ENCODE measurements at regions of chr2 and their contacts with region 1.

Region 1: DNA sequence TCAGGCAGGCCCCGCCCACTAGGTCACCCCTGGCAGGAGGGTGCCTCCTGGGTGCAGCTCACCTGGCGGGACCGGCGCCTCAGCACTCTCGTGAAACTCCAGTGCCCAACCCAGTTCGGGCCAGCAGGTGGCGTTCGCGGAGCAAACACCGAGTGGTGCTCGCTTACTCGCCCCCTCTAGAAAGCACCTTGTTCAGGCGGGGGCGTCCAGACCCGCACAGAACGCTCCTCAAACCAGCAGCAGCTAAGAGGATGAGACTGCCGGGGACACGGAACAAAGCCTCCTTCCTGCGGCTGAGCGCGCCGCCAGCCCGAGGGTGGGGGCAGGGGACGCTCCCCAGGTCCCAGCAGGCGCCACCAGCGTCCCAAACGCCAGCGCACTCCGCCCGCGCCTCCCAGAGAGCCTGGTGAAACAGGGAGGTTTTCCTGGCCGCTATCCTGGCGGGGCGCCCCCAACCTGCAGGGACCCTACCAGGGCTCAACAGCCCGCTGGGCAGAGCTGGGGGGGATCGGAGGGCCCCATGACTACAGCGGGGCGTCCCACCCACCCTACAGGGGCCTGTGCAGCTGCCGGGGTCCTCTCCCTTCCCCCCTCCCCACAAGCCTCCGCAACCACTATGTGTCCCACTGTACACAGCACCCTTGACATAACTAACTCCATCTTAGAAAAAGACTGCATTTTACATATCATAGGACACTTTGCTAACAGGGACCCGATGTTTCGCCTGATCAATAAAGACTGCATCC is 44.7 kb downstream of the MRPS5 start:
- DNase-seq: peak; percentile 84
- H3K4me3 ChIP-seq: peak overlapping the region; percentile 51 to 76
- H3K27ac ChIP-seq: no peak overlapping the region
- H3K4me1 ChIP-seq: peaks cover 0 to 7% of the 10 kb centered on the region in 2 experiments; a peak in 1 of 4 replicates
- H3K27me3 ChIP-seq: peaks cover 69% of the 10 kb centered on the region
- CTCF ChIP-seq: peak; percentile 81
- EP300 ChIP-seq: no peak
- RAD21 ChIP-seq: peak; percentile 52

Region 2: DNA sequence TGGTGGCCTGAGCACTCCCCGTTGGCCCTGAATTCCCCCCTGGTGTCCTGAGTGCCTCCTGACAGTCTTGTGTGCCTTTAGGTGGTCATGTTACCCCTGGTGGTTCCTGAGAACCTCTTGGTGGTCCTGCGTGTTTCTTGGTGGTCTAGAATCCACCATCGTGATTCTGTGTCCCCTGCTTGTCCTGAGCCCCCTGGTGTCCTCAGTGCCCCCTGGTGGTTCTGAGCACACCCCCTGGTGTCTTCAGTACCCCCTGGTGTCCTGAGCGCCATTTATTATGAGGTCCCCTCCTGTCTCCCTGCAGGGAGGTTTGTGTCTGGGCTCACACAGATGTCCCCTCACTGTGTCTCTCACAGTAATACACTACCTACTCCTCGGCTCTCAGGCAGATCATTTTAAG is 112.8 kb before region 1 on chr2:
- CTCF ChIA-PET with region 1: no interaction called
- POLR2A ChIA-PET with region 1: no interaction called
- DNase-seq: no peak
- H3K4me3 ChIP-seq: no peak overlapping the region
- H3K27ac ChIP-seq: no peak overlapping the region
- H3K4me1 ChIP-seq: no peaks in the 10 kb centered on the region
- H3K27me3 ChIP-seq: peaks cover 14% of the 10 kb centered on the region; the same call in 1 of the 2 replicates
- CTCF ChIP-seq: no peak
- EP300 ChIP-seq: no peak
- RAD21 ChIP-seq: no peak

Region 3: DNA sequence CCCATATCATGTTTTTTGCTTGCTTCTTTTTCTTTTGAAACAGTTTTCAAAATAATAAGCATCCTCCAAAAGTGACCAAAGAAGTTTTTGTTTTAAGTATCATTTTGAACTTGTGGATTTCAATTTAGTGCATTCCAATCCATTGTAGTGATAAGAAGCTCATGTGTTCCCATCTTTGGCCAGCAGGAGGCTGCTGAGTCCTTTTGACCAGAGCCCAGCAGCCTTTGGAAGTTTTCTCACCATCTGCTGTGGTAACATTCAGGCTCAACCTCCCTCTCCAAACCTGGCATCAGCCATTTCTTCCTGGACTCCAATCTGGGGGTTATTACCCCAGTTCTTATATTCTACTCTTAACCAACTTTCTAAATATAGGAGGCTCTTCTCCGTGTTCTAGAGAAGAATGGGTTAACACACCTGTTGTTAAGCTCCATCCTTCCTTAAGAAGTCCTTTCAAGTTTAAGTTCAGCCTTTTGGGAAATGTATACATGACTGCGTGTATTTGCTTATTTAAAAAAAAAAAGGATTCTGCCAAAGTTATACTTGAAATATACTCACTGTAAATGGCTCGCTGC is 90.5 kb before region 1 on chr2:
- CTCF ChIA-PET with region 1: interaction called, 11 read pairs
- POLR2A ChIA-PET with region 1: no interaction called
- DNase-seq: peak; percentile 63
- H3K4me3 ChIP-seq: no peak overlapping the region
- H3K27ac ChIP-seq: no peak overlapping the region
- H3K4me1 ChIP-seq: no peaks in the 10 kb centered on the region
- H3K27me3 ChIP-seq: peaks cover 53% of the 10 kb centered on the region
- CTCF ChIP-seq: peak; percentile 77
- EP300 ChIP-seq: no peak
- RAD21 ChIP-seq: peak; percentile 53

Region 4: DNA sequence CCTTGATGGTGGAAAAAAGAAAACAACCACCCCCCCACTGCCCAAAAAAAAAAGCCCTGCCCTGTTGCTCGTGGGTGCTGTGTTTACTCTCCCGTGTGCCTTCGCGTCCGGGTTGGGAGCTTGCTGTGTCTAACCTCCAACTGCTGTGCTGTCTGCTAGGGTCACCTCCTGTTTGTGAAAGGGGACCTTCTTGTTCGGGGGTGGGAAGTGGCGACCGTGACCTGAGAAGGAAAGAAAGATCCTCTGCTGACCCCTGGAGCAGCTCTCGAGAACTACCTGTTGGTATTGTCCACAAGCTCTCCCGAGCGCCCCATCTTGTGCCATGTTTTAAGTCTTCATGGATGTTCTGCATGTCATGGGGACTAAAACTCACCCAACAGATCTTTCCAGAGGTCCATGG is 23.4 kb before region 1 on chr2:
- CTCF ChIA-PET with region 1: interaction called, 15 read pairs
- POLR2A ChIA-PET with region 1: no interaction called
- DNase-seq: no peak
- H3K4me3 ChIP-seq: no peak overlapping the region
- H3K27ac ChIP-seq: no peak overlapping the region
- H3K4me1 ChIP-seq: no peaks in the 10 kb centered on the region
- H3K27me3 ChIP-seq: peaks cover 50% of the 10 kb centered on the region
- CTCF ChIP-seq: no peak
- EP300 ChIP-seq: no peak
- RAD21 ChIP-seq: no peak

Region 5: DNA sequence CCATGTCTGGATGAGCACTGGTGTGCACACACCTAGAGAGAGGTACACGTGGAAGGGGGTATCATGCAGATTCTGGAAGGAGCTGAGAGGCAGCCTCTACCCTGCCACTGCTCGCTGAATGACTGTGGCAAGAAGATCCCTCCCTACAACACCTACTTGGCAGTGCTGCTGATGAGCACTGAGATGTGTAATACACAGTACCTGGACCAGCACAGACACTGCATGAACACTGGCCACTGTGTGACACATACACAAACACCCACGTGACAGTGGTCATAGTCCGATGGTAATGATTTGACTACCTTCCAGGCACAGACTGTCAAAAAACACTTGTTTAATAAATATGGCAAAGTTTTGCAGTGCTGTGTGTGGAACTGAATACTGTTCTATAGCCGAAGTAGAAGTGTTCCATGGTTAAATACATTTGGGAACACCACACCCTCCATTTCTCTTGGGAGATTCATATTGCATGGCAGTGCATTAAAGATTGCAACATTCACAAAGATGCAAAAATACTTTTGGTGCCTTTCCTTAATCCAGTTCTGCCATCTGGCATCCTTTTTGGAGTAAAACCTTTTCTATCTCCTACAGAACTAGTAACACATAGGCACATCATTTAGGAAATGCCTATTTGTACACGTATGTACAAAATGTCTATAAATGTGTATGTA is 15.1 kb after region 1 on chr2:
- CTCF ChIA-PET with region 1: interaction called, 20 read pairs
- POLR2A ChIA-PET with region 1: no interaction called
- DNase-seq: no peak
- H3K4me3 ChIP-seq: no peak overlapping the region
- H3K27ac ChIP-seq: no peak overlapping the region
- H3K4me1 ChIP-seq: no peaks in the 10 kb centered on the region
- H3K27me3 ChIP-seq: no peaks in the 10 kb centered on the region
- CTCF ChIP-seq: no peak
- EP300 ChIP-seq: no peak
- RAD21 ChIP-seq: no peak

Region 6: DNA sequence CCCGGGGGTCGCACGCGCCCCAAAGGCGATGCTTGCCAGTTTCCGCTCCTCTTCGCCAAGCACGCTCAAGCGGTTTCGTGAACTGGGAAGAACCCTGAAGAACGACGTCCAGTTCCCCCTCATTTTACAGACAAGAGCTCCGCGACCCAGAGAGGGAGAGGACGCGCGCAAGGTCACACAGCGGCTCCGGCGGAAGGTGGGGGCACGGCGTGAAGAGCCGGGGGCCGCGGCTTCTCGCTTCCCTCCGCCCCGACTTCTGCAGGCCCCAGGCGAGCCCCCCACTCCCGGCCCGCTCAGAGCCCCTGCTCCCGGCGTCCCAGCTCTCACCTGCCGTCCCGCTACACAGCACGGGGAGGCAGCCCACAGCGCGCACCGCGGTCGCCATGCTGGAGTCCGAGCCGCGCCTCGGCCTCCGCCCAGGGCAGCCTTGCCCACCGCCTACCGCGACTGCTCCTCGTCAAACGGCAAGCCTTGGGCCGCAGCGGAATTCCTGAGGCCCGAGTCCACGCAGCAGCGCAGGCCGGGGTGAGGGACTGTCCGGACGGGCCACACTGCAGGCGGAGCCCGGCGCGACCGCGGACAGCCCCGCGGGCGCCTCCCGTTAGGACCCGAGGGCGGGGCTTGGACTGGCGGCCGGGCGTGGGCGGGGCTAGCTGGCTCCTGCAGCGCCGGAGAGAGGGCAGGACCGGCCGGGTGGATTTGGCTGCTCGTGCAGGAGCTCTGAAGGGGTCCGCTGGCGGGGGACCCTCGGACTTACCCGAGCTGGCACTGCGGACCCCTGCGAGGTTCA is 44.6 kb after region 1 on chr2 and contains the start of gene MRPS5:
- CTCF ChIA-PET with region 1: interaction called, 65 read pairs
- POLR2A ChIA-PET with region 1: no interaction called
- DNase-seq: peak; percentile 96
- H3K4me3 ChIP-seq: peak within 1 kb of the TSS; percentile 77 to 96
- H3K27ac ChIP-seq: peak within 1 kb of the TSS; percentile 77 to 94
- H3K4me1 ChIP-seq: peaks cover 0 to 3% of the 10 kb centered on the region in 2 experiments; a peak in 1 of 4 replicates
- H3K27me3 ChIP-seq: no peaks in the 10 kb centered on the region
- CTCF ChIP-seq: peak; percentile 21; the same call in 1 of the 2 replicates
- EP300 ChIP-seq: 0 out of 4 replicates have a peak, but pooled peaks of 1 of the 2 experiments have one; percentile 26
- RAD21 ChIP-seq: no peak
- polyA plus RNA-seq, gene MRPS5: 32.8 and 40.4 TPM in 2 replicates

Region 7: DNA sequence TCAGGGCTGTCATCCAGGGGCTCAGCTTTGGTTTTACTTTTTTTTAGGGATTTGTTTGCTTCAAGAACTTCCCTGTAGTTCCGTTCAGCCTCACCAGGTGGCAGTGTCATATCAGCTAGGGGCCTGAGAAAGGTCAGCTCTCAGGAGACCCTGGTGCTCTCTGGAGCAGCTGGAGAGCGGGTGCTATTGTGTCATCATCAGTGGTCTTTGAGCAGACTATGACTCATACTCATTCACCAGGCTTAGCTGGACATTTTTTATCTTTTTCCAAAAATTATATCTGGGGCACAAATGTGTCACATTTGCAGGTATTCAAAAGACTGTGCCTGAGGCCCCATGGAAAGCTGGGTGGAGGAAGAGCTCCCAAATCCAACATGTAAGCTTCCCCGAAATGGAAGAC is 154.8 kb after region 1 on chr2:
- CTCF ChIA-PET with region 1: no interaction called
- POLR2A ChIA-PET with region 1: no interaction called
- DNase-seq: peak; percentile 80
- H3K4me3 ChIP-seq: peak overlapping the region in 1 of 2 experiments; percentile 40; a peak in 1 of 4 replicates
- H3K27ac ChIP-seq: no peak overlapping the region
- H3K4me1 ChIP-seq: no peaks in the 10 kb centered on the region
- H3K27me3 ChIP-seq: no peaks in the 10 kb centered on the region
- CTCF ChIP-seq: peak; percentile 67
- EP300 ChIP-seq: no peak
- RAD21 ChIP-seq: peak; percentile 86

Measured in SK-N-SH (cell line).